ENCODE measurements at regions of chr16 and their contacts with region 1.

Region 1: DNA sequence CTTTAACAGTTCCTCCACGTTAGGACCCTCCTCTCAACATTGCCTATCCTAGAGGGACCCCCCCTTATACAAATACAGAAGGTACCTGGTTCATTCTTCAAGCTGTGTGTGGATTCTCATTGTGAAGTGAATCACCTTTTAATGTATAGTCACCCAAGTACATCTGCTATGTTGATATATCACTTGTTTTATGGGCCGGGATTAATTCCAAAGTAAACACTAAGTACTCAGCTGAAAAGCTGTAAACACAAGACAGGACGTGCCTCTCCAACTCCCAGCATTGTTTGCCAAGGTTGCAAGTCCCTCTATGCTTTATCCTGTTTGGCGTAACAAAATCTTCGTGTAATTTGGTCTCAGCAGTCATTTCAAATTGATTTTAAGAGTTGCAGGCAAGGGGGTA is 123.6 kb downstream of the RBFOX1 start:
- DNase-seq: no peak
- ATAC-seq: no peak
- H3K4me3 ChIP-seq: no peak overlapping the region
- H3K27ac ChIP-seq: no peak overlapping the region
- H3K4me1 ChIP-seq: peaks cover 0 to 2% (median 0%) of the 10 kb centered on the region in 12 donors
- H3K27me3 ChIP-seq: no peaks in the 10 kb centered on the region
- CTCF ChIP-seq: no peak
- POLR2A ChIP-seq: no peak

Region 2: DNA sequence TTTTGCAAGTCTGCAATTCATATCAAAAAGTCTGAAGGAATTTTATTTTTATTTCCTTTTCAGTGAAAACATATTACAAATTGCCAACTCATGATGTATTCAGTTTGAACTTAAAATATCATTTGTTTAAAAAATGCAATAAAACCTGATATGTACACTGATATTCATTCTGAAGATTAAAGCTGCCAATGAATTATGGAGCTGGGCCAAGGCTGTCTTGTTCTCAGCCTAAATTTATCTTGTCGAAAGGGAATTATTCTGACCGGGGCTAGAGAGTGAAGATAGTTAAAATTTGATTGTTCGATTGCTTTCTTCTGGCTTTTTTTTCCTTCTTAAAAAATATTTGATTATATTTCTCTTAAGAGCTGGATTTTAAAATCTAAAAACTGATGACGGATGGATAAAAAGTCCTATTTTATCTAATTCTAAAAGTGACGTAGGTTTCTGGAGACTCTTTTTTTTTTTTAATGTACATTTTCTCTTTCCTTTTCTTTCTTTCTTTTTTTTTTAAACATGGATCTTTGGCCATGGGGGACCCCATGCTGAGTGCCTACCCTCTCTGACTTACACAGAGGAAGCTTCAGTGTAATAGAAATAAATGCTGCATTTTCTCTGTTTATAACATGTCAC is 177.5 kb before region 1 on chr16:
- intact Hi-C with region 1: no loop called
- DNase-seq: no peak
- ATAC-seq: no peak
- H3K4me3 ChIP-seq: no peak overlapping the region
- H3K27ac ChIP-seq: no peak overlapping the region
- H3K4me1 ChIP-seq: no peaks in the 10 kb centered on the region
- H3K27me3 ChIP-seq: no peaks in the 10 kb centered on the region
- CTCF ChIP-seq: no peak
- POLR2A ChIP-seq: no peak

Region 3: GRCh38 chr16:7397901-7398300 is 58.3 kb before region 1 on chr16:
- intact Hi-C with region 1: loop called in 1 of 10 experiments (anchors 10 kb)
- DNase-seq: no peak
- ATAC-seq: peak in 1 of 4 donors; percentile 24
- H3K4me3 ChIP-seq: no peak overlapping the region
- H3K27ac ChIP-seq: no peak overlapping the region
- H3K4me1 ChIP-seq: no peaks in the 10 kb centered on the region
- H3K27me3 ChIP-seq: no peaks in the 10 kb centered on the region
- CTCF ChIP-seq: no peak
- POLR2A ChIP-seq: no peak